ENCODE measurements at regions of chr20 and their contacts with region 1.

Region 1: DNA sequence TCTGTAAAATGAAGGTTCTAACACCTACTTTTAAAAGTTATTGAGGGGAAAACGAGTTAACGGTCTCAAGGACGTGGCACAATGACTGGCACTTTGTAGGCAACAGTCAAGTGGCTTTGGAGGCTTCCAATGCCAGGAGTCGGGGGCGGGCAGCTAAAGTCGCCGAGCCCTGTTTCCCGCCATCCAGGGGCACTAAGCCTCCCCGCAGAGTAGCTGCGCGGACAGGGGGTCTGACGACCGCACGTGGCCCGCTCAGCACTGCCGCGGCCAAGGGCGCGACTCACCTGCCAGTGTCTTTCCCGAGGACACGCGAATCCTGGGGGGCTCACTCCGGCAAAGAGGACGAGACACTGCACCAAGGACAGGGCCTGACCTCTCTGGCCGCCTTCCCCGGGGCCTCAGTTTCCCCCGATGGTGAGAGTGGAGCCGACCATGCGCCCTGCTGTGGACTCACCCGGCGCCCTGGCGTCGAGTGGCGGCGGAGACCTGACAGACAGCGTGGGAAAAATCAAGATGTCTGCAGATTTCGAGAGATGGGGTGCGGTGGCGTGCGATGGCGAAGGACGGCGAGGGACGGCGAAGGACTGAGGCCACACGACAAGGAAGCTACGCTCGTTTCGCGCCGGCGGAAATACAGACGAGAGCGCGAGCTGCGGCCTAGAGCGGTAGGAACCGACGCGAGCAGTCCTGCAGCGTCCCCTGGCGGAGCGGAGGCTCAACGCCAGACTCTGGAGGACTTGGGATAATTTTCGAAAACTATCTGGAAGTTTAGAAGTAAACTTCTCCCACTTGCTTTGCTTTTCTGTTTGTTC is at the start of gene SNHG17:
- DNase-seq: peak; percentile 88

Region 2: GRCh38 chr20:38418509-38419204 is 16.3 kb before region 1 on chr20:
- CTCF ChIA-PET with region 1: interaction called, 5 read pairs
- POLR2A ChIA-PET with region 1: interaction called, 25 read pairs
- DNase-seq: no peak

Region 3: GRCh38 chr20:38424404-38424803 is 10.5 kb before region 1 on chr20:
- CTCF ChIA-PET with region 1: no interaction called
- POLR2A ChIA-PET with region 1: interaction called, 25 read pairs
- DNase-seq: no peak

Region 4: GRCh38 chr20:38446441-38447209 is 11.7 kb after region 1 on chr20:
- CTCF ChIA-PET with region 1: interaction called, 12 read pairs
- POLR2A ChIA-PET with region 1: interaction called, 110 read pairs
- DNase-seq: peak; percentile 90